A673 (cell line): ENCODE measurements at regions of chr7 and their contacts with region 1.

Region 1: DNA sequence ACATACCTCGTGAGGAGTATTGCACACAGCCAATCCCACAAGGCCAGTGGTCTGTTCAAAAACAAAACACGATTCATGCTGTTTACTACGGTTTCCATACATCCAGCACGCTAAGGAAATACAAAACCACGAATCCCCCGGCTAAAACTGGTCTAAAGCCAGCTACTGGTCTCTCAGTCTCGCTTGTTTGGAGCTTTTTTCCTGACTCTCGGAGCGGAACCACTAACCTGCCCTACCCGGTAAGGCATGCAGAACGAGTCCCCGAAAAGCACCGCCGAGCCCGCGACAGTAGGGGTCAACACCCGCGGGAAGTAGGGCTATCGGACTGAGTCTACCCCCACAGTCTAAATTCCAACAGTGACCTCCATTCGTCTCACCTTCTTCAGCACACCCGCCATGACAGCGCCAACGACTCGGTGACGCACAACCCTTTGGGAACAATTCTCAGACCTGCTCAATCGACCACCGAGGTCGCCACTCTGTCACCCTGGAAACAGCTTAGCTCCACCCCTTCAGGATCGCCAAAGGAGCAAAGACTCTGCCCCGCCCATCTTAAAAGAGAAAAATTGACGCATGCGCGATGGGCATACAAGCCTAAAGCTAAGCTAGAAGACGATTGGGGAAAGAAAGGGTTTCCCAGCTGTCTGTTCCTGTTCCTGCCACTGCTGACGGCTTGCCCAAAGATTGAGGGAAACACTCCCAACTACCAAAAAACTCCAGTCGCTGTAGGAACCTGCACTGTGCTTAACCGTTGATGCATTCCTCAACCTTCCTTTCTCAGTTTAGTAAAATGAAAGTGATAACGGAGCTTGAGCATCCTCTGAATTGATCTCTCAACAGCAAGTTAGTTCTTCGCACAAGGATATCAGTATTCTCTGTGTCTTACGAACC is at the start of gene NDUFA5:
- DNase-seq: peak; percentile 99
- H3K4me3 ChIP-seq: peak within 1 kb of the TSS; percentile 67
- H3K27ac ChIP-seq: peak within 1 kb of the TSS; percentile 85
- H3K4me1 ChIP-seq: peaks cover 7% of the 10 kb centered on the region
- H3K27me3 ChIP-seq: no peaks in the 10 kb centered on the region
- CTCF ChIP-seq: no peak
- total RNA-seq, gene NDUFA5: 107 and 114 TPM in 2 replicates

Region 2: DNA sequence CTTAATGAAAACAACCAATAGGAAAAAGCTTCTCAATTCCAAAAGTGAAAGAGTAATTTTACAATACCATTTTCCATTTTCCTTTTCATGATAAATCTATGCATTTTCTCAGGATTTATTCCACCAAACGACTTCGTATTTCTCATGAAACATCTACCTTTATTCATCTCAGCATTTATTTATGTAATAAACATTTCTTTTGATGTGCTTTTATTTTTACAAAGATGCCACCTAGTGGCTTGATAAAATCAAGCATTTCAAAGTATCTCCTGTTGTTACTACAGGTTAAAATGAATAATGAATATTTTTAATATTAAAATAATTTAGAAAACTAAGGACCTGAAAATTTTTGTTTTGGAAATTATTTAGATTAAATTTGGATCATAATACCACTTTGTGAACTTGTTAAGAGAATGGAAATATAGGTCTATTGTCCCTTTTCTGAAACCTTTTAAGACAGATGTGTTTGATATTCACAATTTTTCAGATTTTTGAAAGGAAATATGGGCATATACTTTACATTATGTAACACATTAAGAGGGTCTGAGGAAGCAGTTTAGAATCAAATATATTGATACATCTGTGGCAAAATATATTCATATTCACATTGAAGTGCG is 20.5 kb before region 1 on chr7:
- CTCF ChIA-PET with region 1: no interaction called
- POLR2A ChIA-PET with region 1: no interaction called
- intact Hi-C with region 1: loop called (anchors 2 kb)
- DNase-seq: peak; percentile 50
- H3K4me3 ChIP-seq: no peak overlapping the region
- H3K27ac ChIP-seq: peak overlapping the region; percentile 11
- H3K4me1 ChIP-seq: peaks cover 32% of the 10 kb centered on the region
- H3K27me3 ChIP-seq: peaks cover 8% of the 10 kb centered on the region
- CTCF ChIP-seq: peak; percentile 70

Region 3: GRCh38 chr7:123570401-123571182 is 12.9 kb after region 1 on chr7:
- CTCF ChIA-PET with region 1: no interaction called
- POLR2A ChIA-PET with region 1: no interaction called
- intact Hi-C with region 1: no loop called
- DNase-seq: no peak
- H3K4me3 ChIP-seq: no peak overlapping the region
- H3K27ac ChIP-seq: no peak overlapping the region
- H3K4me1 ChIP-seq: no peaks in the 10 kb centered on the region
- H3K27me3 ChIP-seq: no peaks in the 10 kb centered on the region
- CTCF ChIP-seq: no peak

Region 4: DNA sequence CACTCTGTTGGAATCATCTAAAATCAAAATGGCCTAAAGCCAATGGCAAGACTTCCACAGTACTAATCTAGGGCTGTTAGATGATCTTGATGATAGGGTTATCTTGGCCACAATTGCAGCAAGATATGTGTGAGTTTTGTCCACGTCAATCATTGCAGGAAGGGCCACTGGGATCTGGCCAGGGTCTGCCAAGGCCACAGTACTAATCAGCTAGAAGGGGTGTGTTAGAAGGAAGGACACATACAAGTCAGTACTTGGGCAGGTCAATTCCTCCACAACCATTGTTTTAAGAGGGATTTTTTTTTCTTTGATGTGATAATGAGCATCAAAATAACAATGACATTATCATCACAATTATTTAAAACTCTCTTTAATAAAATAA is 99.7 kb after region 1 on chr7:
- CTCF ChIA-PET with region 1: no interaction called
- POLR2A ChIA-PET with region 1: no interaction called
- intact Hi-C with region 1: no loop called
- DNase-seq: no peak
- H3K4me3 ChIP-seq: no peak overlapping the region
- H3K27ac ChIP-seq: no peak overlapping the region
- H3K4me1 ChIP-seq: no peaks in the 10 kb centered on the region
- H3K27me3 ChIP-seq: no peaks in the 10 kb centered on the region
- CTCF ChIP-seq: no peak